Naive thymus-derived CD4-positive, alpha-beta T cell (primary cell): ENCODE measurements at regions of chr2 and their contacts with region 1.

Region 1: DNA sequence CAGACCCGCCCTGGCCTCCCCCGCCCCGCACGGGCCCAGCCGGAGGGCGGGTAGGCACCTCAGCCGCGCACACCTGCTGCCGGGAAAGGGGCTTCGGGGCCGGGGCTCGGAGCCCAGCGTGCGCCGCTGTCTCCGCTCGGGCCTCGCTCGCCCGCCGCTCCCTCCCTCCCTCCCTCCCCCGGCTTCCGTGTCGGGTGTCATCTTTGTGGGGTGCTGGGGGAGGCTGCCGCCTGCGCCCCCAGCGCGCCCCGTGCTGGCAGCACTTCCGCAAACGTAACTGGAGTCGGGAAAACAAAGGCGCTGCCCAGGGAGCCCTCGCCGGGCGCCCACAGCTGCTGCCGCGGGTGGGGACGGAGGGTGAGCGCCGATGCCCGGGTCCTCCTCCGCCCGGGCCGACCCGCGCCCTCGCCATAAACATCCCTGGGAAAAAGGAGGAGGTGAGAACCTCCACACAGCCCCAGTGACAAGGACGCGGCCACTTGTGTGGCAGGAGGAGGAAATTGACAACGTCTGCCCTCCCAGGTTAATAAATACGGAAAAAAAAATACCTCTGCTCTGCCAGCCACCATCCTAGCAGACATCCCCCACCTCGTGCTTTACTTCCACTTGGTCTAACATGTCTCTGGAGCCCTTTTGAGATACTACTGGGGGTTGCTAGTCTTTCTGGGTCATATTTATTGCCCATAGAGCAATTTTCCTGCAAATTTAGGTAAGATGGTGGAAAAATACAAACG is 550 bp downstream of the MFSD6 start:
- DNase-seq: peak in 8 of 9 donors; percentile 69 to 86 (median 82)
- ATAC-seq: peak; percentile 68
- H3K4me3 ChIP-seq: peak overlapping the region; percentile 76
- H3K4me3 Mint-ChIP-seq: peak overlapping the region; percentile 87 to 95 (median 92)
- H3K27ac ChIP-seq: peak overlapping the region; percentile 100
- H3K27ac Mint-ChIP-seq: peak overlapping the region; percentile 94 to 98 (median 98)
- H3K4me1 ChIP-seq: peaks cover 28 to 41% of the 10 kb centered on the region in 2 donors
- H3K4me1 Mint-ChIP-seq: peaks cover 29 to 52% (median 45%) of the 10 kb centered on the region in 7 donors
- H3K27me3 ChIP-seq: no peaks in the 10 kb centered on the region
- H3K27me3 Mint-ChIP-seq: no peaks in the 10 kb centered on the region

Region 2: DNA sequence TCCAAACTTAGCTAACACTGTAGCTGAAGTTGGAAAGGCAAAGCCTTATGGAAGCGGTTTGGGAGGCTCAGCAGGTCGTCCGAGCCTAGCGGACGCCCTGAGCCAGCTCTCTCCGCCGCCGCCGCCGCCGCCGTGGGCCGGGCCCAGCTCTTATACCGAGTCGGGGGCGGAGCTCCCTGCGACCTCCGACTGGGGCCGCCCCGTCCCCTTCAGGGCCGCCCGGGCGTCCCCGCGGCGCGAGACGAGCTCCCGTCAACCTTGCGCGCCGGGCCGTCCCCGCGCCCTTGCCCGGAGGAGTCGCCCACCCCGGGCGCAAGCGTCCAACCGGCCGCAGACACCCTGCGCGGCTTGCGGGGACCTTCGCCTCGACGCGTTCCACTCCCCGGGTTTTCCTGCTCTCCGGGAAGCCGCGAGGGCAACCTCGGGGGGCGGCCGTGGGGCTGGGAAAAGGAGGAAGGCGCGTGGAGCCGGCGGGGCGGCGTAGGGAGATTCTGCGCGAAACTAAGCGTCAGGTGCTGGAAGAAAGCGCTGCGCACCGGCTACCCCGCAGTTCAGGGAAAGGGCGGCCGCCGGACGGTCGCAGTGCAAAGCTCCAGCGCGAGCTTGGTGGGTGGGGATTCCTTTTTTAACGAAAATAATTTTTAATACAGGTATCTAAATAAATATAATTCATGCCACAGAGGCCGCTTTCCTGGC is 827.9 kb before region 1 on chr2 and contains the start of gene SLC40A1:
- CTCF ChIA-PET with region 1: no interaction called
- POLR2A ChIA-PET with region 1: interaction called, 6 read pairs
- intact Hi-C with region 1: loop called in 1 of 2 experiments (anchors 2 kb)
- DNase-seq: peak; percentile 54 to 75 (median 66)
- ATAC-seq: peak; percentile 96
- H3K4me3 ChIP-seq: peak within 1 kb of the TSS; percentile 79
- H3K4me3 Mint-ChIP-seq: peak within 1 kb of the TSS; percentile 83 to 100 (median 93)
- H3K27ac ChIP-seq: peak within 1 kb of the TSS; percentile 80
- H3K27ac Mint-ChIP-seq: peak within 1 kb of the TSS; percentile 30 to 98 (median 87)
- H3K4me1 ChIP-seq: peaks cover 0 to 12% of the 10 kb centered on the region in 2 donors
- H3K4me1 Mint-ChIP-seq: peaks cover 24 to 63% (median 56%) of the 10 kb centered on the region in 7 donors
- H3K27me3 ChIP-seq: peaks cover 0 to 5% of the 10 kb centered on the region in 2 donors
- H3K27me3 Mint-ChIP-seq: peaks cover 0 to 47% (median 0%) of the 10 kb centered on the region in 5 donors
- total RNA-seq, gene SLC40A1: 4.2 to 38.0 (median 24.4) TPM

Region 3: GRCh38 chr2:189783927-189784867 is 624.5 kb before region 1 on chr2 and contains the starts of genes ORMDL1 and PMS1:
- CTCF ChIA-PET with region 1: no interaction called
- POLR2A ChIA-PET with region 1: no interaction called
- intact Hi-C with region 1: loop called (anchors 1 kb)
- DNase-seq: peak; percentile 90 to 96 (median 94)
- ATAC-seq: peak; percentile 95
- H3K4me3 ChIP-seq: peak within 1 kb of the TSS; percentile 76
- H3K4me3 Mint-ChIP-seq: peak within 1 kb of the TSS; percentile 86 to 97 (median 94)
- H3K27ac ChIP-seq: peak within 1 kb of the TSS; percentile 92
- H3K27ac Mint-ChIP-seq: peak within 1 kb of the TSS; percentile 89 to 97 (median 95)
- H3K4me1 ChIP-seq: peaks cover 21 to 24% of the 10 kb centered on the region in 2 donors
- H3K4me1 Mint-ChIP-seq: peaks cover 26 to 72% (median 57%) of the 10 kb centered on the region in 7 donors
- H3K27me3 ChIP-seq: no peaks in the 10 kb centered on the region
- H3K27me3 Mint-ChIP-seq: no peaks in the 10 kb centered on the region
- total RNA-seq, gene ORMDL1: 80.1 to 208 (median 142) TPM
- total RNA-seq, gene PMS1: 18.2 to 30.1 (median 22.5) TPM

Region 4: DNA sequence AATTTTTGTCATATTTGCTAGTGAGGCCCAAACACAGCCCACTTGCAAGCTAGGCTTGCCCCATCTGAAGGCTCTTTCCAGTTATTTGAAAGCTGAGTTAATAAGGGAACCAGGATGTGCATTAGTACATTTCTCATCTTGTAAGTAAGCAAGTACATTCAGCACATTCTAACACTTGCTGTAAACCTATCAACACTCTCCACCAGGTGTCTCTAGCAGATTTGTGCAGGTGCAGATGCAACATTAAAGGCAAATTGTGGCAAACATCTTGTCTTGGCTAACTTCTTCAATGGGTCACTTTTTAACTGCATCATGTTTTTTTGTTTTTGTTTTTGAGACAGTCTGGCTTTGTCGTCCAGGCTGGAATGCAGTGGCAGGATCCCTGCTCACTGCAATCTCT is 25.9 kb before region 1 on chr2:
- CTCF ChIA-PET with region 1: interaction called, 3 read pairs
- POLR2A ChIA-PET with region 1: interaction called, 7 read pairs
- intact Hi-C with region 1: loop called in 1 of 2 experiments (anchors 1 kb)
- DNase-seq: peak in 7 of 9 donors; percentile 48 to 74 (median 65)
- ATAC-seq: peak; percentile 84
- H3K4me3 ChIP-seq: no peak overlapping the region
- H3K4me3 Mint-ChIP-seq: no peak overlapping the region
- H3K27ac ChIP-seq: no peak overlapping the region
- H3K27ac Mint-ChIP-seq: peak overlapping the region in 2 of 9 donors; percentile 28 to 68
- H3K4me1 ChIP-seq: no peaks in the 10 kb centered on the region
- H3K4me1 Mint-ChIP-seq: peaks cover 0 to 6% (median 0%) of the 10 kb centered on the region in 7 donors
- H3K27me3 ChIP-seq: no peaks in the 10 kb centered on the region
- H3K27me3 Mint-ChIP-seq: peaks cover 0 to 2% (median 0%) of the 10 kb centered on the region in 5 donors

Region 5: DNA sequence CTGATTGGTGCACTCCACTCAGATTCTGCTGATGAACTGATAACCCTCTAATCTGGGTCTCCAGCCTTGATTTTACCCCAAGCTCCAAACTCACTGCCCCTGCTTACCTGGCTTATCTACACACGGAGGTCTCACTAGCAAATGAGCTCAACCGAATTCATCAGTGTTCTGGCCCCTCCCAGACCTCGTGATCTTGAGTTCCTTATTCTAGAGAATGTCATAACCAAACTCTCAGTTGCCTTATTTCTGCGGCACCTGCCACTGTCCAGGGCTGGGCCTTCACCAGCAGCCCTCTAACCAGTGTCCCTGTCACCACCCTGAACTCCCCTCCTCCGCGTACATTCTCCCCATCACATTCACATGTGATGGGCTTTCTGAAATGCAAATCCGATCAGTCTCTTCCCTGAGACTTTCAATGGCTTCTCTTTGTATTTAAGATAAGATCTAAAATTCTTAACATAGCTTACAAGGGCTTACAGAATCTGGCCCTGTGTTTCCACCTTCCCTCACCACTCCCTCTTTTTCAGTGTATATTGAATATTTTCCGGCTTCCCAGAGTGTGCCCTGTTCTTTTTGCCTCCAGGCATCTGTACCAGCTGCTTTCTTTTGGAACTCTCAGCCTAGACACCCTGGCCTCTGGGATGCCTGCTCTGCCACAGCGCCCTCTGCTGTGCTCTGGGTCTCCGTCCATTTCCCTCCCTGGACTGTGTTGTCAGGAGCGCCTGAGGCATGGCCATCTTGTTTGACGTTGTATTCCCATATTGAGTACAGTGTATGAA is 271.3 kb after region 1 on chr2:
- CTCF ChIA-PET with region 1: no interaction called
- POLR2A ChIA-PET with region 1: no interaction called
- intact Hi-C with region 1: loop called in 1 of 2 experiments (anchors 1 kb)
- DNase-seq: peak; percentile 27 to 59 (median 46)
- ATAC-seq: peak; percentile 92
- H3K4me3 ChIP-seq: no peak overlapping the region
- H3K4me3 Mint-ChIP-seq: peak overlapping the region in 2 of 10 donors; percentile 8
- H3K27ac ChIP-seq: no peak overlapping the region
- H3K27ac Mint-ChIP-seq: peak overlapping the region in 7 of 9 donors; percentile 7 to 74 (median 52)
- H3K4me1 ChIP-seq: peaks cover 5 to 10% of the 10 kb centered on the region in 2 donors
- H3K4me1 Mint-ChIP-seq: peaks cover 17 to 49% (median 41%) of the 10 kb centered on the region in 7 donors
- H3K27me3 ChIP-seq: no peaks in the 10 kb centered on the region
- H3K27me3 Mint-ChIP-seq: no peaks in the 10 kb centered on the region